ENCODE measurements at regions of chr6 and their contacts with region 1.

Region 1: DNA sequence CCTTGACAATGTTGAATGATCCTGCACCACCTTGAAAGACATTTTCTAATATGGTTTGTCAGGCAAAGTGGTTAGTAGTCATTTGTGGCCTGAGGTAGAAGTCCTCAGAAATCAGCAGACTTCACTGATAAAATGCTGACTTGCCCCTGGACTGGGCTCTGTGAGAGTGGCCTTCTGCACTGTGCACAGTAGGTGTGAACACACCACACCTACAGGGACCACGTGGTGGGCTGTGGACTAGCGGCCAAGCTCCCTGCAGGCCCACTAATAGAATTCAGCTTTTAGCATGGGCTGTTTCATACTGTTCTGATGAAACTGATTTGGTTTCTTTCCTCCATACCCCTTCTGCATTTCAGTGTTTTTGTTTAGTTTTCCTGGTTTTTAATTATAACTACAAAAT is 7.3 kb downstream of the BPHL start:
- DNase-seq: no peak
- ATAC-seq: no peak
- H3K4me3 ChIP-seq: no peak overlapping the region
- H3K27ac ChIP-seq: peak overlapping the region in 1 of 12 donors; percentile 25
- H3K4me1 ChIP-seq: peaks cover 0 to 19% (median 0%) of the 10 kb centered on the region in 12 donors
- H3K27me3 ChIP-seq: no peaks in the 10 kb centered on the region
- CTCF ChIP-seq: no peak
- POLR2A ChIP-seq: no peak

Region 2: DNA sequence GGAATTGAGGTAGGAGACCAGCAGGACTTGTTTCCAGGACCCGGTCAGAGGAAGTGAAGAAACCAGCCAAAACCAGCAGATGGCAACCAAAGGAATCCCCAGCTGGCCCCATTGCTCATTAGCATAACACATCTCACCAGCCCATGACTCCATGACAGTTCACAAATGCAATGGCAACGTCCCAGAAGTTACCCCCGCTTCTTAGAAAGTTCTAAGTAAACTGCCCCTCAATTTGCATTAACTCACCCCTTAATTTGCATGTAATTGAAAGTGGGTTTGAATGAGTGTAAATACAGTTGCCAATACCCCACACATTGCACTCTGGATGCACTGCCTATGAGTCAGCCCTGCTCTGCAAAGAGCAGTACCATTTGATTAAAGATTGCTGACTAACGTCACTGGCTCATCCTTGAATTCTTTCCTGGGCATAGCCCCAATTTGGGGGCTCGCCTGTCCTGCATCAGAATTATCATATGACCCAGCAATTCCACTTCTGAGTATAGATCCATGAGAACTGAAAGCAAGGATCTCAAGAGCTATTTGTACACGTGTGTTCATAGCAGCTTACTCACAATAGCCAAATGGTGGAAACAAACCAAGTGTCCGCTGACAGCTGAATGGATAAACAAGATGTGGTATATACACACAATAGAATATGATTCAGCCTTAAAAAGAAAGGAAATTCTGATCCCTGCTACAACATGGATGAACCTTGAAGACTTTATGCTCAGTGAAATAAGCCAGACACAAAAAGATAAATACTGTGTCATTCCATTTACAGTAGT is 411.5 kb before region 1 on chr6:
- intact Hi-C with region 1: no loop called
- DNase-seq: no peak
- ATAC-seq: peak; percentile 55 to 80 (median 78)
- H3K4me3 ChIP-seq: no peak overlapping the region
- H3K27ac ChIP-seq: peak overlapping the region in 2 of 12 donors; percentile 29 to 34
- H3K4me1 ChIP-seq: peaks cover 0 to 16% (median 0%) of the 10 kb centered on the region in 12 donors
- H3K27me3 ChIP-seq: no peaks in the 10 kb centered on the region
- CTCF ChIP-seq: no peak
- POLR2A ChIP-seq: no peak

Region 3: DNA sequence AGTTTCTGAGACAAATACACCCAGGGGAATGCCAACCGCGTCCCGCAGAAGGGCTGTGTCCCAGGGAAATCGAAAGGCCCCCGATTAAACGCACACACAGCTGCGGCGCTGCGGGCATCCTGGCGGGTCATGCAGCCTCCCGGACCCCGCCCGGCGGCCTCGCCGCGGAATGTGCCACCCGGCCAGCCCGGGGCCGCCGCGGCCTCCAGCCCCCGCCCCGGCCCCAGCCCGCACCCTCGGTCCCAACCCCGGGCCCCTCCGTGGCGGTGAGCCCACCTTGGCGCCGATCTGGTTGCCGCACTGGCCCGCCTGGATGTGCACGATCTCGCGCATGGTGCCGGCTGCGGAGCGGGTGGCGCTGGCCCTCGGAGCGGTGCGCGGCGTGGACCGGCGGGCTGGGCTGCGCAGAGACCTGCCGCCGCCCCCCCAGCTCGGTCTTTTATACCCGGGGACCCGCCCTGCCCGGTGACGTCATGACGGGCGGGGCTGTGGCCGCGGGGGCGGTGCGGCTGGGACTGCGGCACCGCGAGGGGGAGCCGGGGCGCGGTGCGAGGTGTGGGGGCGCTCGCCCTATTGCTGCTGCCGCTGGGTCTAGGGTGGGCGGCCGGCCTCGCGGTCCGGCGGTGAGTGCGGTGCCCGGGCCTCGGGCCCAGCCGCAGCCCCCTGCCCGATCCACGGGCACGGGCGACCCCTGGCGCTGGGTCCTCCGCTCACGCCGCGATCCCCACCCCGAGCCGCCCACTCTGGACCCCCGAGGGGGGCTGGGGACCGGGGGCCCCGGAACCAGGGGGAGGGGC is 31.5 kb after region 1 on chr6 and contains the start of gene TUBB2A:
- intact Hi-C with region 1: loop called in 4 of 10 experiments (anchors 1 to 5 kb)
- DNase-seq: peak; percentile 85 to 95 (median 90)
- ATAC-seq: peak; percentile 64 to 93 (median 90)
- H3K4me3 ChIP-seq: peak within 1 kb of the TSS; percentile 74 to 99 (median 86)
- H3K27ac ChIP-seq: peak within 1 kb of the TSS; percentile 93 to 99 (median 98)
- H3K4me1 ChIP-seq: peaks cover 0 to 24% (median 2%) of the 10 kb centered on the region in 12 donors
- H3K27me3 ChIP-seq: no peaks in the 10 kb centered on the region
- CTCF ChIP-seq: peak in 11 of 12 donors; percentile 50 to 85 (median 62)
- POLR2A ChIP-seq: peak; percentile 91 to 99
- total RNA-seq, gene TUBB2A: 12.7 to 61.7 (median 26.0) TPM

Region 4: DNA sequence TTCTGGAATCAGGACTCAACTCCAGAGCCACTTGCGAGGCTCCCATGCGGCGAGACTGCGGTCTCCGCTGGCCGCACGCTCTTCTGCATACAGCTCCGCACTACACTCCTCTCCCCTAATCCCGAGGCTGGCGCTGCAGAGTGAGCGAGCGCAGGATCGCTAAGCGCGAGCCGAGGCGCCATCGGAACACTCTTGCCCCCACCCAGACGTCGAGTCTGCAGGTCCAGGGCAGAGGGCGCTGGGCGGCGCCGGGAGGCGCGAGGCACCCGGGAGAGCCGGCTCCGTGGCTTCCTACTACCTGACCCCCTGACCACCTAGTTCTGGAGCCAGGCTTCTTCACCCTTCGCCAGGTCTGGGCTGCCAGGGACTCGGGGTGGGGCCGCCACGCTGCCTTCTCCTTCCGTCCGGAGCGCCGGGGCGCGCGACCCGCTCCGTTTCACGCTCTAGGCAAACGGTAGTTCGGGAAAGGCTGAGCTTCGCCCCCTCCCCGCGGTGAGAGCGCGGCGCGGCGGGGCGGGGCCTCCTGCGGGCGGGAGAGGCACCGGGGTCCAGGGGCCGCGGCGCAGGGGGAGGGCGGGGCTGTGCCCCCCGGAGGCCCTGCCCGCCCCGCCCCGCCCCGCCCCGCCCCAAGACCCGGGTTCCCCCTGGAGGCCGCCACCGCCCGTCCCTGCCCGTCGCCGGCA is 36.9 kb after region 1 on chr6:
- intact Hi-C with region 1: loop called in 4 of 10 experiments (anchors 1 to 5 kb)
- DNase-seq: peak; percentile 67 to 86 (median 78)
- ATAC-seq: peak; percentile 51 to 85 (median 82)
- H3K4me3 ChIP-seq: peak overlapping the region; percentile 14 to 88 (median 76)
- H3K27ac ChIP-seq: peak overlapping the region; percentile 74 to 97 (median 90)
- H3K4me1 ChIP-seq: peaks cover 0 to 49% (median 11%) of the 10 kb centered on the region in 12 donors
- H3K27me3 ChIP-seq: no peaks in the 10 kb centered on the region
- CTCF ChIP-seq: peak in 5 of 12 donors; percentile 19 to 37 (median 24)
- POLR2A ChIP-seq: peak in 1 of 2 donors; percentile 62

Region 5: GRCh38 chr6:3226848-3227362 is 101.1 kb after region 1 on chr6:
- intact Hi-C with region 1: no loop called
- DNase-seq: peak in 1 of 5 donors; percentile 34
- ATAC-seq: peak in 1 of 4 donors; percentile 7
- H3K4me3 ChIP-seq: peak overlapping the region; percentile 9 to 59 (median 49)
- H3K27ac ChIP-seq: no peak overlapping the region
- H3K4me1 ChIP-seq: peaks cover 2 to 52% (median 34%) of the 10 kb centered on the region in 12 donors
- H3K27me3 ChIP-seq: peaks cover 22 to 63% (median 43%) of the 10 kb centered on the region in 9 donors
- CTCF ChIP-seq: no peak
- POLR2A ChIP-seq: no peak

Region 6: GRCh38 chr6:3251462-3252314 is 125.9 kb after region 1 on chr6:
- intact Hi-C with region 1: loop called (anchors 1 to 5 kb)
- DNase-seq: peak; percentile 71 to 90 (median 81)
- ATAC-seq: peak; percentile 44 to 86 (median 80)
- H3K4me3 ChIP-seq: peak overlapping the region in 1 of 12 donors; percentile 5
- H3K27ac ChIP-seq: peak overlapping the region in 3 of 12 donors; percentile 20 to 70 (median 39)
- H3K4me1 ChIP-seq: peaks cover 0 to 32% (median 11%) of the 10 kb centered on the region in 12 donors
- H3K27me3 ChIP-seq: peaks cover 0 to 20% (median 0%) of the 10 kb centered on the region in 9 donors
- CTCF ChIP-seq: peak; percentile 93 to 99 (median 97)
- POLR2A ChIP-seq: peak in 1 of 2 donors; percentile 14

Region 7: GRCh38 chr6:3258720-3259490 is 133.1 kb after region 1 on chr6 and contains the start of gene PSMG4:
- intact Hi-C with region 1: loop called in 3 of 10 experiments (anchors 2 to 5 kb)
- DNase-seq: peak; percentile 96 to 99 (median 97)
- ATAC-seq: peak; percentile 93 to 98 (median 98)
- H3K4me3 ChIP-seq: peak within 1 kb of the TSS; percentile 60 to 99 (median 94)
- H3K27ac ChIP-seq: peak within 1 kb of the TSS in 11 of 12 donors; percentile 40 to 85 (median 82)
- H3K4me1 ChIP-seq: peaks cover 0 to 38% (median 18%) of the 10 kb centered on the region in 12 donors
- H3K27me3 ChIP-seq: no peaks in the 10 kb centered on the region
- CTCF ChIP-seq: no peak
- POLR2A ChIP-seq: peak in 1 of 2 donors; percentile 60
- total RNA-seq, gene PSMG4: 6.2 to 12.6 (median 9.7) TPM

Region 8: DNA sequence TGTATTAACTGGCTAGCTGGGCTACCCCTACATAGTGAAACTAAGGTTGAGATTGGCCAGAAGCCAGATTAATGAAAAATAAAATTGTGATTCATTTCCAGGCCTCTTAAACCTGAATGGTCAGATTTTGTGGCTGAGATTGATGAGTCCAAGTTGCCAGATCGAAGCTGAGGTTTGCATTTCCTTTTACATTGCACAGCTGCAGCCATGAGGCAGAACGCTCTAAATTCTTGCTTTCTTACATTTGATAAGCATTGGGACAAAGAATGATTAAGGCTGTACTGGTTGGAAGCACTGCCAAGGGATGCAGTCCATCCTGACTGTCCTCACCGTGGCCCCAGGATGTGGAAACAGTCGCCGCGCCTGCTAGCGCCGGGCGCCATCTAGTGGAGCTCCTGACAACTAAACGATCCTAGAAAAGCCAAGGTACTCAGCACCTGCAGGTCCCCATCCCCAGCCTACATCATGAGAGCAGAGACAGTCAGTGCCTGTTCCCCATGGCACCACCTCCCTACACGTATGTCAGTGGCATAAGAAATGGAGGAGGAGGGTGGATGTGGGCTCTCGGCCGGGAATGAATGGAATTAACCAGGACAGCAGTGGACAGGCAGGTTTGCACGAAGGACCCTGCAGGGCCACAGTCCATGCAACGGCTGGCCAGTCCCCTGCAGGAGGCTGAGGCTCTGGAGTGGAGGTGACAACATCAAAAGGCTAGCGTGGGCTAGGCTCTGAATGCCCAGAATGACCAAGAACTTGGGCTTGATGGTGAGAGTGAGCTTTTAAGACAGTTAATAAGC is 606.7 kb after region 1 on chr6:
- intact Hi-C with region 1: loop called in 4 of 10 experiments (anchors 1 to 10 kb)
- DNase-seq: peak; percentile 66 to 80 (median 72)
- ATAC-seq: peak in 3 of 4 donors; percentile 74 to 81 (median 80)
- H3K4me3 ChIP-seq: no peak overlapping the region
- H3K27ac ChIP-seq: peak overlapping the region in 1 of 12 donors; percentile 6
- H3K4me1 ChIP-seq: peaks cover 0 to 21% (median 7%) of the 10 kb centered on the region in 12 donors
- H3K27me3 ChIP-seq: no peaks in the 10 kb centered on the region
- CTCF ChIP-seq: peak; percentile 73 to 93 (median 85)
- POLR2A ChIP-seq: no peak

Measured in heart left ventricle (tissue), 16 donors.